ENCODE measurements at regions of chr7 and their contacts with region 1.

Region 1: GRCh38 chr7:143321734-143322133 is 5.8 kb downstream of the CLCN1 start:
- DNase-seq: no peak
- ATAC-seq: peak in 1 of 2 donors; percentile 49

Region 2: GRCh38 chr7:142925413-142925812 is 396.3 kb before region 1 on chr7:
- intact Hi-C with region 1: no loop called
- DNase-seq: no peak
- ATAC-seq: no peak

Region 3: DNA sequence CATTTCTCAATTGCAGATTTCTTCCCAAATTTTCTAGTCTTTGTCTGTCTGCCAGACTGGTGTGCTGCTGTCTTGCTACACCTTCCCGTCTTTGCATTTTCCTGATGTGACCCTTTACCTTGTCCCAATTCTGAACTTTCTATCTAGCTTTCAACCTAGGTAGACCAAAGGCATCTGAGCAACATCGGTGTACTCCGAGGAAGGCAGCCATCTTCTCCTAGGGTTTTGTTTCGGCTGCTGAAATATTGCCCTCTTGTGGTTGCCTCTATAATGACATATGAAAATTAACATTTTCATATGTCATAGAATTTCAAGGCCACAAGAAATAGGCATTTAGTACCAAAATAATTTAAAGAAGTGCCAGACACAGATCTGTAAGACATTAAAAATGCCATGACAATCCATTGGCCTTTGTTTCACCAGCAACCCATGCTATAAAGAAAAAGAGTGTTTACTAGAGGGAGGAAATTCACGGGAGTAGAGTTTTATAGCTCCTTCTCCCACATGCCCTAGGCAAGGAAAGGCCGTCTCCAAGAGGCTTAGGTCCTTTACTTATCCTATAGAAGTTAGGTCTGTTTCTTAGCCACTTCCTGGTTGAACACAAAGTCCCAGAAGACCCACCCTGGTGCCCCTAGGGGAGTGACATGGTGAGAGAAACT is 318.2 kb before region 1 on chr7:
- intact Hi-C with region 1: no loop called
- DNase-seq: no peak
- ATAC-seq: peak; percentile 53 to 58

Region 4: DNA sequence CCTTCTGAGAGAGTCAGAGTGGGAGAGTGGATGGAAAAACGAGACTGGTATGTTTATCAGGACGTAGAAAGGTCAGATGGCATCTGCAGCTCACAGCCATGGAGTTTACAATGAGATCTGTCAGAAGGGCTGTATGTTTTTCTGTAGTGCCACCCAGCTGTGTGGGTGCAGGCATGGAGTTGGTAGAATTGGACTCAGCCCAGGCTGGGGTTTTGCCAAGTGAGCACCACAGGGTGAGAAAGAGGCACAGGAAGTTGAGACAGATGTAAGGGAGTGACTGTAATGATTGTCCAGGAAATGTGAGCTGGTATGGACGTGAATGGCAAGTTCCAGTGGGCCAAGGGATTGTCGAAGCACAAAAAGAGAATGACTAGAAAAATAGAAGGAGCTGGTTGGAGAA is 50.3 kb after region 1 on chr7:
- intact Hi-C with region 1: loop called in 1 of 2 experiments (anchors 10 kb)
- DNase-seq: no peak
- ATAC-seq: peak; percentile 80 to 83

Region 5: DNA sequence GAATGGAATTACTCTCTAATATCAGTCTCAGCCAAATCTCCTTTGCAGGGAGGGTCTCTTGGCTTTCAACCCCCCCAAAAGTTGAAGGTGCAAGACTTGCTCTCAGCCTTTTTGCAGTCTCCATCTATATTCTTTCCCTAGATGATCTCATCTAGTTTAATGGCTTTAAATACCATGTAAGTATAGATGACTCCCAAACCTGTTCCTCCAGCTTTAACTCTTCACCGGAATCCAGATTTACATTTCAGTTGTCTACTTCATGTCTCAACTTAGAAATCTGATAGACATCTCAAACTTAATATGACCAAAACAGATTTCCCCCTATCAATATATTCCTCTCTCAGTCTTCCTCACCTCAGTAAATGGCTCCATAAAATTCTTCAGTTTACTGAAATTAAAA is 146.0 kb after region 1 on chr7:
- intact Hi-C with region 1: no loop called
- DNase-seq: no peak
- ATAC-seq: no peak

Measured in left cardiac atrium (tissue), 4 donors.